ENCODE measurements at regions of chr9 and their contacts with region 1.

Region 1: GRCh38 chr9:107172160-107172978 is 110.7 kb upstream of the RAD23B start:
- DNase-seq: peak; percentile 67
- ATAC-seq: peak; percentile 75
- H3K4me3 ChIP-seq: peak overlapping the region; percentile 39; the same call in 1 of the 2 replicates
- H3K27ac ChIP-seq: no peak overlapping the region
- H3K4me1 ChIP-seq: peaks cover 18% of the 10 kb centered on the region
- H3K27me3 ChIP-seq: no peaks in the 10 kb centered on the region
- CTCF ChIP-seq: peak; percentile 83 to 94 (median 94); a peak in 5 of 6 replicates
- EP300 ChIP-seq: no peak
- POLR2A ChIP-seq: no peak
- RAD21 ChIP-seq: peak; percentile 92

Region 2: GRCh38 chr9:105842023-105842644 is 1330.2 kb before region 1 on chr9:
- CTCF ChIA-PET with region 1: interaction called, 3 read pairs
- POLR2A ChIA-PET with region 1: no interaction called
- RAD21 ChIA-PET with region 1: interaction called, 3 read pairs
- SMC1A ChIA-PET with region 1: interaction called, 4 read pairs
- in situ Hi-C with region 1: loop called (anchors 10 kb)
- intact Hi-C with region 1: loop called (anchors 1 kb)
- DNase-seq: peak; percentile 3
- ATAC-seq: 0 out of 3 replicates have a peak, but pooled peaks have one; percentile 36
- H3K4me3 ChIP-seq: no peak overlapping the region
- H3K27ac ChIP-seq: no peak overlapping the region
- H3K4me1 ChIP-seq: no peaks in the 10 kb centered on the region
- H3K27me3 ChIP-seq: no peaks in the 10 kb centered on the region
- CTCF ChIP-seq: peak; percentile 73 to 81 (median 73)
- EP300 ChIP-seq: no peak
- POLR2A ChIP-seq: no peak
- RAD21 ChIP-seq: peak; percentile 86

Region 3: DNA sequence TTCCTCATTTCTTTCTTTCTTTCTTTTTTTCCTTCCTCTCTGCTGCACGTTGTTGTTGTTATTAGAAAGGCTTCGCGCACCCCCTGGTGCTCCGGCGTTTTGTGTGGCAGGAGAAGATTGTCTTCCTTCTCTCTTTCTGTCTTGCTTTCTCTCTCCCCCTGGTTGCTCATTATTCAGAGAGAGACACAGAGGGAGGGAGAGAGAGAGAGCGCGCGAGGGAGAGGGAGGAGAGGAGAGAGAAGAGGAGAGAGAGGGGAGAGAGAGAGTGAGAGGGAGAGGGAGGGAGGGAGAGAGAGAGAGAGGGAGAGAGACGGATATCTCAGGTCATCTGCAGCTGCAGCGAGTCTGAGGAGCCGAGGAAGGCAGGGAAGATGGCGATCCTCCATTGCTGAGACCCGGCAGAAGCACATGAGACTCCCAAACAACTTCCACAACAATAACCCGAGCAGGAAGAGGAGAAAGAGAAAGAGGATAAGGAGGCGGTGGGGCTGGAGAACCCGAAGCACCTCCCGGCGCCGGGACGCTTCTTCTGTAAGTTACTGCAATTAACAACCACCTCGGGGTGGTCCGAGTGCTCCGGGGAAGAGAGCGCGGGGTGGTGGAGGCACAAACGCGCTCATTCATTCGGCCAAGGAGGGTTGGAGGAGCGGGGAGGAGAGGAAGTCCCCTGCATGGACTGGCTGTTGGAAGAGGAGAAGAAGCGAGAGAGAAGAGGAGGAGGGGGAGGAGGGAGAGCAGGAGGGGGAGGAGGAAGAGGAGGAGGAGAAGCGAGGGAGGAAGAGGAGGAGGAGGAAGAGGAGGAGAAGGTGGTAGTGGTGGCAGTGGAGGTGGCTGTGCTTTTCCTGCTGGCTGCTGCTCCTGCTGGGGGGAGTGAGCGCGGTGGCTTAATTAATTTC is 309.3 kb before region 1 on chr9 and contains the start of gene ZNF462:
- CTCF ChIA-PET with region 1: interaction called, 5 read pairs
- POLR2A ChIA-PET with region 1: interaction called, 3 read pairs
- RAD21 ChIA-PET with region 1: interaction called, 3 read pairs
- SMC1A ChIA-PET with region 1: interaction called, 6 read pairs
- in situ Hi-C with region 1: no loop called
- intact Hi-C with region 1: loop called (anchors 5 kb)
- DNase-seq: no peak
- ATAC-seq: peak; percentile 42
- H3K4me3 ChIP-seq: no peak within 1 kb of the TSS
- H3K27ac ChIP-seq: no peak within 1 kb of the TSS
- H3K4me1 ChIP-seq: no peaks in the 10 kb centered on the region
- H3K27me3 ChIP-seq: peaks cover 6 to 19% of the 10 kb centered on the region in 2 experiments; a peak in 3 of 4 replicates
- CTCF ChIP-seq: peak in 1 of 3 experiments; percentile 44; a peak in 2 of 6 replicates
- EP300 ChIP-seq: no peak
- POLR2A ChIP-seq: no peak
- RAD21 ChIP-seq: peak; percentile 29; the same call in 1 of the 2 replicates
- polyA plus RNA-seq, gene ZNF462: 0.27 to 0.42 TPM

Region 4: GRCh38 chr9:107190061-107190935 is 17.9 kb after region 1 on chr9:
- CTCF ChIA-PET with region 1: interaction called, 12 read pairs
- POLR2A ChIA-PET with region 1: interaction called, 12 read pairs
- RAD21 ChIA-PET with region 1: interaction called, 51 read pairs
- SMC1A ChIA-PET with region 1: interaction called, 119 read pairs
- in situ Hi-C with region 1: no loop called
- intact Hi-C with region 1: no loop called
- DNase-seq: no peak
- ATAC-seq: peak; percentile 77
- H3K4me3 ChIP-seq: no peak overlapping the region
- H3K27ac ChIP-seq: no peak overlapping the region
- H3K4me1 ChIP-seq: no peaks in the 10 kb centered on the region
- H3K27me3 ChIP-seq: no peaks in the 10 kb centered on the region
- CTCF ChIP-seq: no peak
- EP300 ChIP-seq: no peak
- POLR2A ChIP-seq: no peak
- RAD21 ChIP-seq: no peak

Region 5: GRCh38 chr9:107243751-107244150 is 71.4 kb after region 1 on chr9:
- CTCF ChIA-PET with region 1: interaction called, 6 read pairs
- POLR2A ChIA-PET with region 1: interaction called, 5 read pairs
- RAD21 ChIA-PET with region 1: interaction called, 29 read pairs
- SMC1A ChIA-PET with region 1: interaction called, 14 read pairs
- in situ Hi-C with region 1: no loop called
- intact Hi-C with region 1: no loop called
- DNase-seq: no peak
- ATAC-seq: peak; percentile 85
- H3K4me3 ChIP-seq: no peak overlapping the region
- H3K27ac ChIP-seq: no peak overlapping the region
- H3K4me1 ChIP-seq: no peaks in the 10 kb centered on the region
- H3K27me3 ChIP-seq: no peaks in the 10 kb centered on the region
- CTCF ChIP-seq: no peak
- EP300 ChIP-seq: no peak; a peak in 1 of 4 replicates
- POLR2A ChIP-seq: no peak
- RAD21 ChIP-seq: no peak

Region 6: DNA sequence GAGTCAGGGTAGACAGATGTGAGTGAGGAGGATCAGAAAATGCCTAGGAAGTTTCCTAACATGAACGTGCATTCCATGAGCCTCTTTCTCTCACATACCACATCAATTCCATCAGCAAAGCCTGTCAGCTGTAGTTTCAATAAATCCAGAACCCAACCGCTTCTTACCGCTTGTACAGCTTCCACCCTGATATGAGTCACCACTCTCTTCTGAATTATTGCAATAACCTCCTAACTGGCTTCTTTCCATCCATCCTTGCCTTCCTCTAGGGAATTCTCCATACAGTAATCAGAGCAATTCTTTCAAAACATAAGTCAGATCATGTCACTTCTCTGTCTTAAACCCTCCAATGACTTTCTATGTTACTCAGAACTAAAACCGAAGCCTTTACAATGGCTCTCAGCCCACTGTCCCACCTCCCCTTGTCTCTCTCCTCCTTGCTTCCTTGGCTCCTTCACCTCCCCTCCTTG is 102.6 kb after region 1 on chr9:
- CTCF ChIA-PET with region 1: interaction called, 7 read pairs
- POLR2A ChIA-PET with region 1: no interaction called
- RAD21 ChIA-PET with region 1: interaction called, 11 read pairs
- SMC1A ChIA-PET with region 1: interaction called, 19 read pairs
- in situ Hi-C with region 1: no loop called
- intact Hi-C with region 1: loop called (anchors 5 kb)
- DNase-seq: no peak
- ATAC-seq: peak; percentile 27
- H3K4me3 ChIP-seq: no peak overlapping the region
- H3K27ac ChIP-seq: no peak overlapping the region
- H3K4me1 ChIP-seq: peaks cover 6% of the 10 kb centered on the region
- H3K27me3 ChIP-seq: no peaks in the 10 kb centered on the region
- CTCF ChIP-seq: no peak
- EP300 ChIP-seq: no peak
- POLR2A ChIP-seq: no peak
- RAD21 ChIP-seq: no peak